ENCODE measurements at regions of chrX and their contacts with region 1.

Region 1: GRCh38 chrX:111445486-111445885 is 33.5 kb upstream of the DCX start:
- DNase-seq: no peak
- ATAC-seq: no peak

Region 2: GRCh38 chrX:111168314-111168713 is 277.2 kb before region 1 on chrX:
- intact Hi-C with region 1: loop called (anchors 5 kb)
- DNase-seq: no peak
- ATAC-seq: no peak

Region 3: GRCh38 chrX:111262096-111262495 is 183.4 kb before region 1 on chrX:
- intact Hi-C with region 1: loop called (anchors 5 kb)
- DNase-seq: no peak
- ATAC-seq: no peak

Measured in Right ventricle myocardium inferior (tissue), 1 donor.